Activated naive CD4-positive, alpha-beta T cell treated with anti-CD3 and anti-CD28 coated beads, Interleukin-2, amount 10 ng/mL, durations not matched to agents 7 days and 5 days (primary cell): ENCODE measurements at regions of chr5 and their contacts with region 1.

Region 1: GRCh38 chr5:177370488-177371119 is 12.9 kb downstream of the RGS14 start:
- DNase-seq: peak; percentile 82
- H3K4me3 Mint-ChIP-seq: peak overlapping the region; percentile 62
- H3K27ac Mint-ChIP-seq: peak overlapping the region; percentile 33
- H3K4me1 Mint-ChIP-seq: peaks cover 77% of the 10 kb centered on the region
- H3K27me3 Mint-ChIP-seq: no peaks in the 10 kb centered on the region

Region 2: DNA sequence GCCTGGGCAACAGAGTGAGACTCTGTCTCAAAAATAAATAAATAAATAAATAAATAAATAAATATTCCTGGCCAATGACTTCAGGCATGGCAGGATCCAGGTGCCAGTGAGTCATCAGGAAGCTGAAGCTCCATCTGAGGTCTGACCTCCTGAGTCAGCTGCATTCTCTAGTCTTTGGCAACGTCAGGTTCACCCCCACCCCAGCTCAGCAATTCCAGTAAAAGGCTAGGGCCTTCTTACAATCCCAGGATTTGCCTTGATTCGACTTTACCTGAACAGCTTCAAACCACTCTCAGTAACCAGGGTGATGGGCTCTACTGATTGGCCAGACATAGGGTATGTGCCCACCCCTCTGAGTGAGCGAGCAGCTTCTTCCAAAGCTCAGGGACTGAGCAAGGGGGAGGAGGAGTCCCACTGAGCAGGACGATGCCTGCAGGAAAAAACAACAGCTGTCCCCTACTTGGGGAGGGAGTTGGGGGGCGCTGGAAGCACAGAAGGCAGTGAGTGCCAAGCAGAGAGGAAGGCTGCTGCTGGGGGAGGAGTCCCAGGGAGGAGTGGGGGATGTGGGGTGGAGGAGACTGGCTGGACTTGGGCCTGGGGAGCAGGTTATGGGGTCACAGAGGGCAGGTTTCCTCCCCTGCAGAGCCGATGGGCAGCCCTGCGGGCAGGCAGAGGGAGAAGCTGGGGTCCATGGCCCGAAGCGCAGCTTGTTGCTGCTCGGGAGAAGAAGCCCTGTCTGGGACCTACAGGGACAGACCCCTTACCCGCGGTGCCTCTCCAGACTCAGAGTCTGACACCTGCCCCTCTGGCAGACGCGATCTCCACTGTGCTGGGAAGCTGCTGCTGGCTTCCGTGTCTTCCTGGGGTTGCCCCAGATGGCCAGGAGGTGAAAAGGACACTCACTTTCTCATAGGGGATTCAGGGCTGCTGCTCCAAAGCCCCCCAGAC is 586.1 kb before region 1 on chr5:
- CTCF ChIA-PET with region 1: no interaction called
- DNase-seq: no peak
- H3K4me3 Mint-ChIP-seq: no peak overlapping the region
- H3K27ac Mint-ChIP-seq: no peak overlapping the region
- H3K4me1 Mint-ChIP-seq: peaks cover 4% of the 10 kb centered on the region
- H3K27me3 Mint-ChIP-seq: peaks cover 72% of the 10 kb centered on the region

Region 3: DNA sequence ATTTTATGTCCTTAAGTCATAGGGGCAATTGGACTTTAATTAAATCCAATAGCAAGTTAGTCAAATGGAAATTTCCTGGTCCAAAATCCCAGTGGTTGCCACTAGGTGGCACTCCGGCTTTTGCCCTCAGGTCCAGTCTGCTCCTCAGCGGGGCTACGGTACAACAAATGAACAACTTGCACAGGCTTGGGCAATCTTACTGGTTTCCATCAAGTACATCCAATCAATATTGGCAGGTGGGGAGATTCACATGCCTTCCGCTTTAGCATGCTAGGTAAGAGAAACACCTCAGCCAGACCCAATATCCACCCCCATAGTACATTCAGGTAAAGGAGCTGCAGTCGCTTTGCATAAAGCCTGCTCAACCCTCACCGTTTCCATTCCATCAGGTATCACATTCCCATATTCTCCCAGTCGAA is 52.6 kb before region 1 on chr5:
- CTCF ChIA-PET with region 1: interaction called, 18 read pairs
- DNase-seq: peak; percentile 85
- H3K4me3 Mint-ChIP-seq: no peak overlapping the region
- H3K27ac Mint-ChIP-seq: no peak overlapping the region
- H3K4me1 Mint-ChIP-seq: peaks cover 44% of the 10 kb centered on the region
- H3K27me3 Mint-ChIP-seq: no peaks in the 10 kb centered on the region

Region 4: GRCh38 chr5:177357459-177358351 is 12.9 kb before region 1 on chr5 and contains the start of gene RGS14:
- CTCF ChIA-PET with region 1: interaction called, 75 read pairs
- DNase-seq: peak; percentile 82
- H3K4me3 Mint-ChIP-seq: peak within 1 kb of the TSS; percentile 93
- H3K27ac Mint-ChIP-seq: peak within 1 kb of the TSS; percentile 75
- H3K4me1 Mint-ChIP-seq: peaks cover 83% of the 10 kb centered on the region
- H3K27me3 Mint-ChIP-seq: no peaks in the 10 kb centered on the region

Region 5: DNA sequence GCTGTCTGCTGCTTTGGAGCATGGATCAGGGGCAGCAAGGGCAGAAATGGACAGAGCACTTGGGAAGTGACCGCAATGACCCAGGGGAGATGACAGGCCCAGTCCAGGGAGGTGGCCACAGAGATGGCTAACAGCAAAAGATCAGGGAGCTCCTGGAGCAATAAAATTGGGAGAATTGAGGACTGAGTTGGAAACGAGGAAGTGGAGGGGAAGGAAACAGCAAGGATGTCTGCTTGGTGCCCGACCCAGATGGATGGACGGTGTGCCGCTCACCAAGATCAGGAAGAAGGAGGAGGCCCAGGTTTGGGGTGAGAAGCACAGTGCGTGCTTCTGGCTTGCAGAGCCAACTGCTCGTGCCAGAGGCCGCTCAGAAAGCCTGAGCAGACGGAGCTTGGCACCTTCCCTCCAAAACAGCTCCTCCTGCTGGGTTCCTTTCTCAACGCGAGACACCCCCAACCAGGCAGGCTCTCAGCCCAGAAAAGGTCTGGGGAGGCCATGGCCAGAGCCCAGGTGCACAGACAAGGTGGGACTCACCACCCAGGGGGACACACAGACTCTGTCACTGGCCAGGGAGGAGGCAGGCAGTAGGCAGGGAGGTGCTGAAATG is 11.9 kb after region 1 on chr5:
- CTCF ChIA-PET with region 1: interaction called, 112 read pairs
- DNase-seq: peak; percentile 64
- H3K4me3 Mint-ChIP-seq: no peak overlapping the region
- H3K27ac Mint-ChIP-seq: no peak overlapping the region
- H3K4me1 Mint-ChIP-seq: peaks cover 31% of the 10 kb centered on the region
- H3K27me3 Mint-ChIP-seq: peaks cover 44% of the 10 kb centered on the region